ENCODE measurements at regions of chr22 and their contacts with region 1.

Region 1: GRCh38 chr22:38056969-38057891 is at the start of gene PICK1:
- DNase-seq: peak; percentile 43 to 85 (median 74)
- ATAC-seq: peak; percentile 80 to 84 (median 82)
- H3K4me3 ChIP-seq: peak within 1 kb of the TSS; percentile 84 to 88
- H3K4me3 Mint-ChIP-seq: peak within 1 kb of the TSS; percentile 93 to 96 (median 96)
- H3K27ac ChIP-seq: peak within 1 kb of the TSS; percentile 92
- H3K27ac Mint-ChIP-seq: peak within 1 kb of the TSS; percentile 97 to 98
- H3K4me1 ChIP-seq: peaks cover 2 to 26% of the 10 kb centered on the region in 2 experiments
- H3K4me1 Mint-ChIP-seq: peaks cover 19 to 21% (median 20%) of the 10 kb centered on the region in 3 donors
- H3K27me3 ChIP-seq: peaks cover 0 to 15% of the 10 kb centered on the region in 2 experiments
- H3K27me3 Mint-ChIP-seq: no peaks in the 10 kb centered on the region
- total RNA-seq, gene PICK1: 26.4 to 32.0 (median 27.7) TPM

Region 2: DNA sequence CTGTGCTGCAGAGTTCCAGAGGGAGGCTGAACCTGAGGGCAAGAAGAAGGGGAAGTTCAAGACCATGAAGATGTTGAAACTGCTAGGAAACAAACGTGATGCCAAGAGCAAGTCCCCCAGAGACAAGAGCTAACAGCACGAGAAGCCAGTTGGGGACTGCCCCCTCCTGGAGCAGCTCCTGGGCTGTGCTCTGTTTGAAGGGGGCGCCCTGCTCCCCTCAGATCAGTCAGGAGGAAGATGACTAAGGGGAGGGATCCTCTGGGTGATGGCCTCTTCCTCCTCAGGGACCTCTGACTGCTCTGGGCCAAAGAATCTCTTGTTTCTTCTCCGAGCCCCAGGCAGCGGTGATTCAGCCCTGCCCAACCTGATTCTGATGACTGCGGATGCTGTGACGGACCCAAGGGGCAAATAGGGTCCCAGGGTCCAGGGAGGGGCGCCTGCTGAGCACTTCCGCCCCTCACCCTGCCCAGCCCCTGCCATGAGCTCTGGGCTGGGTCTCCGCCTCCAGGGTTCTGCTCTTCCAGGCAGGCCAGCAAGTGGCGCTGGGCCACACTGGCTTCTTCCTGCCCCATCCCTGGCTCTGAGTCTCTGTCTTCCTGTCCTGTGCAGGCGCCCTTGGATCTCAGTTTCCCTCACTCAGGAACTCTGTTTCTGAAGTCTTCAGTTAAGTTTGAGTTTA is 116.4 kb before region 1 on chr22:
- CTCF ChIA-PET with region 1: no interaction called
- POLR2A ChIA-PET with region 1: no interaction called
- DNase-seq: no peak
- ATAC-seq: no peak
- H3K4me3 ChIP-seq: no peak overlapping the region
- H3K4me3 Mint-ChIP-seq: no peak overlapping the region
- H3K27ac ChIP-seq: no peak overlapping the region
- H3K27ac Mint-ChIP-seq: no peak overlapping the region
- H3K4me1 ChIP-seq: no peaks in the 10 kb centered on the region
- H3K4me1 Mint-ChIP-seq: no peaks in the 10 kb centered on the region
- H3K27me3 ChIP-seq: no peaks in the 10 kb centered on the region
- H3K27me3 Mint-ChIP-seq: no peaks in the 10 kb centered on the region

Region 3: DNA sequence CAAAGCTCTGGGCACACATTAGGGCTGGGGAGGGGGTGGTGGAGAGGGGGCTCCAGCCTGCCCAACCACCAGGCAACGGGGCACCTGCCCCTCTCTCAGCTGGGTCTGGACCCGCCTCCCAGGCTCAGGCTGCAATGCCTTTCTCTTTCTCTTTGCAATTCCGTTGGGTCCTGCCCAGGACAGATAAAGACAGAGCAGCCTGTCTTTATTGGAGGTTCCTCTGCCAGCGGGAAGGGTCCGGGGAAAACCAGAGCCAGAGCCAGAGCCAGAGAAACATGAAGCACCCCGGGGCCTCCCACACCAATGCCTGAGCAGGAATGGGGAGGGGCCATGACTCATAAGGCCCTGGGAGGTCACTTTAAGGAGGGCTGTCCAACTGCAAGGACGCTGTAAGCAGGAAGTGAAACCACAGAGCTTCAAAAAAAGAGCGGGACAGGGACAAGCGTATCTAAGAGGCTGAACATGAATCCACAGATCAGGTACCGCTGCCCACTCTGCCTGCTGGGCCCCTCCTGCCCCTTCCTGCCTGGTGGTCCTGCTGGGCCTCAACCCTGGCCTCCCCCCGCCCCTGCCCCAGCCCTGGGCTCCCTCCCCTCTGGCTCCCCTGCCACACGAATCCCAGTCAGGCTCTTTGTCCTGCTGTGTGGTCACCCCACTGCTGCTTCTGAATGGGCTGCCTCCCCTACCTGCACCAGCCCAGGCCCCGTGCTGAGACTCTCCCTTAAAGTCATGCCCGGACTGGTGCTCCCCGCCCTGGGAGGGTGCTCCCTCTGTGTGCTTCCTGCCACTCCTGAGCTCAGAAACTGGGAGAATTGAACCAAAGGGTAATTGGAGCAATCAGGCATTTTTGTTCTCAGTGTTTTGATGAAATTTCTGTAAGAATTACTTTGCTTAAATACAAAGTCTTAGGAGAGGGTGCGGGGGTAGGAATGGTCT is 925.0 kb after region 1 on chr22 and contains the start of gene APOBEC3B:
- CTCF ChIA-PET with region 1: interaction called in 1 of 2 experiments, 16 read pairs
- POLR2A ChIA-PET with region 1: no interaction called
- DNase-seq: peak; percentile 22 to 76 (median 49)
- ATAC-seq: peak; percentile 46 to 70 (median 54)
- H3K4me3 ChIP-seq: peak within 1 kb of the TSS in 1 of 2 donors; percentile 36
- H3K4me3 Mint-ChIP-seq: peak within 1 kb of the TSS; percentile 71 to 79 (median 79)
- H3K27ac ChIP-seq: no peak within 1 kb of the TSS
- H3K27ac Mint-ChIP-seq: peak within 1 kb of the TSS; percentile 61 to 78
- H3K4me1 ChIP-seq: peaks cover 7 to 42% of the 10 kb centered on the region in 2 experiments
- H3K4me1 Mint-ChIP-seq: peaks cover 25 to 47% (median 36%) of the 10 kb centered on the region in 3 donors
- H3K27me3 ChIP-seq: peaks cover 0 to 13% of the 10 kb centered on the region in 2 experiments
- H3K27me3 Mint-ChIP-seq: no peaks in the 10 kb centered on the region
- total RNA-seq, gene APOBEC3B: 1.4 to 2.4 (median 1.9) TPM

Measured in T-cell (primary cell).